ENCODE measurements at regions of chr13 and their contacts with region 1.

Region 1: GRCh38 chr13:61410669-61411297 is 4.9 kb downstream of the PCDH20 start:
- DNase-seq: no peak
- H3K4me3 ChIP-seq: no peak overlapping the region
- H3K27ac ChIP-seq: no peak overlapping the region
- H3K4me1 ChIP-seq: no peaks in the 10 kb centered on the region
- H3K27me3 ChIP-seq: peaks cover 2 to 21% (median 16%) of the 10 kb centered on the region in 4 experiments
- CTCF ChIP-seq: peak in 2 of 3 experiments; percentile 35 to 45; a peak in 2 of 4 replicates
- EP300 ChIP-seq: no peak
- POLR2A ChIP-seq: no peak
- RAD21 ChIP-seq: peak; percentile 64 to 66

Region 2: GRCh38 chr13:61286148-61286745 is 124.5 kb before region 1 on chr13:
- CTCF ChIA-PET with region 1: interaction called, 15 read pairs
- POLR2A ChIA-PET with region 1: no interaction called
- DNase-seq: peak; percentile 9 to 51
- H3K4me3 ChIP-seq: no peak overlapping the region
- H3K27ac ChIP-seq: no peak overlapping the region
- H3K4me1 ChIP-seq: no peaks in the 10 kb centered on the region; a peak in 1 of 7 replicates
- H3K27me3 ChIP-seq: peaks cover 0 to 1% (median 0%) of the 10 kb centered on the region in 4 experiments; a peak in 1 of 7 replicates
- CTCF ChIP-seq: peak; percentile 17 to 71 (median 62)
- EP300 ChIP-seq: no peak
- POLR2A ChIP-seq: no peak
- RAD21 ChIP-seq: peak; percentile 86 to 88

Region 3: GRCh38 chr13:61370520-61370919 is 40.3 kb before region 1 on chr13:
- CTCF ChIA-PET with region 1: no interaction called
- POLR2A ChIA-PET with region 1: no interaction called
- DNase-seq: no peak
- H3K4me3 ChIP-seq: no peak overlapping the region
- H3K27ac ChIP-seq: no peak overlapping the region
- H3K4me1 ChIP-seq: no peaks in the 10 kb centered on the region; a peak in 1 of 7 replicates
- H3K27me3 ChIP-seq: no peaks in the 10 kb centered on the region
- CTCF ChIP-seq: no peak
- EP300 ChIP-seq: no peak
- POLR2A ChIP-seq: no peak
- RAD21 ChIP-seq: no peak

Region 4: GRCh38 chr13:61423915-61424314 is 13.1 kb after region 1 on chr13:
- CTCF ChIA-PET with region 1: interaction called, 10 read pairs
- POLR2A ChIA-PET with region 1: interaction called, 5 read pairs
- DNase-seq: no peak
- H3K4me3 ChIP-seq: no peak overlapping the region
- H3K27ac ChIP-seq: no peak overlapping the region
- H3K4me1 ChIP-seq: no peaks in the 10 kb centered on the region
- H3K27me3 ChIP-seq: no peaks in the 10 kb centered on the region
- CTCF ChIP-seq: no peak
- EP300 ChIP-seq: no peak
- POLR2A ChIP-seq: no peak
- RAD21 ChIP-seq: no peak

Measured in H1 (cell line).